ENCODE measurements at regions of chr5 and their contacts with region 1.

Region 1: GRCh38 chr5:131417240-131417869 is 153.5 kb downstream of the CDC42SE2 start:
- DNase-seq: peak; percentile 55
- CTCF ChIP-seq: peak; percentile 62

Region 2: DNA sequence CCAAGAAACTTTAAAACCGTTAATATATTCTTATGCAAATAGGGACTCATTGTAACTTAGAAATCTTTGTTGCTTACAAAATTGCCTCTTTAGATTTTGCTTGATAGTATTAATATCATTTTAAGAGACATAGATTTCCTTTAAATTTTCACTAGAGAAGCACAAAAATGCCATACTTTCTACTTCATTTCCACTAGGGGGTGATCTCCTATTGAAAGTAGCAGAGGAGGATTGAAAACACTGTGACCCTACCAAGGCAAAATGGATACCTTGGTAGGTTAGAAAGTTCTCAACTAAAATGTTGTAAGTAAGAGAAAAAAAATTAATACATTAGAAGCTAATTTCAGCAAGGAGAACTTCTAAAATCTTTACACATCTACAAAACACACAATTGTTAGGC is 1308.2 kb before region 1 on chr5:
- in situ Hi-C with region 1: loop called (anchors 25 kb)
- DNase-seq: peak; percentile 10
- CTCF ChIP-seq: peak; percentile 43

Region 3: GRCh38 chr5:130874861-130875417 is 542.4 kb before region 1 on chr5:
- in situ Hi-C with region 1: loop called (anchors 25 kb)
- DNase-seq: no peak
- CTCF ChIP-seq: no peak